ENCODE measurements at regions of chr20 and their contacts with region 1.

Region 1: DNA sequence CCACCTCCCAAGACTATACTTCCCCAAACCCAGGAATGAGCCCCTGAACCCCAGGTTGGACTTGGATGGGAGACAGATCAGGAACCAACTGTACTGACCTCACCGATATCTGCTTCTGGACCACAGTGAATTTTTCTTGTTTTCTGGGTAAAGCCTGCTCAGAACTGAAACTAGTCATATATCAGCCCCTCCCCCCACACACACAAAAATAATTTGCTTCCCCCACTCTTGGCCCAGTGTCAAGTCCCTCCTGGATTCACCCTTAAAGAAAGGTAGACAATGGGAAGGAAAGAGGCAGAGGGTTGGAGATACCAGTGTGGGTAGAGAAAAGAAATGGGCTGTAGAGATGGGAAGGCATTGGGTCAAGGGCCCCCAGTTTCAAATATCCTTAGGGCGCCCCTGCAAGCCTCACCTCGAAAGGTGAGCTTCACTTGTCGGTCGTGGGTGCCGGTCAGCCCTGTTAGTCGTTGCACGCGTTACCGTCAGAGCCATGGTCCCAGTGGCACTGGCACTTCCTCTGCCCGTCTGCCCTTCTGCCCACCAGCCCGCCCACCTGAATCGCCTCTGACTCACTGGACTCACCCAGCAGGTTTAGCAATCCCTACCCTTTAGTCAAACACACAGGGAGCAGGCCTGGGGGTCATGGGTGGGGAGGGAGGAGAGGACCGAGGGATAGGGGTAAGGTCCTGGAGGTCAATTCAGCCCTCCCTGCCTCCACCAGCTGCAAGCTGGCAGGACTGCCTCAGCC is 8.5 kb upstream of the SPAG4 start:
- DNase-seq: no peak
- ATAC-seq: peak; percentile 22
- H3K4me3 ChIP-seq: no peak overlapping the region
- H3K4me1 ChIP-seq: no peaks in the 10 kb centered on the region
- CTCF ChIP-seq: no peak

Region 2: DNA sequence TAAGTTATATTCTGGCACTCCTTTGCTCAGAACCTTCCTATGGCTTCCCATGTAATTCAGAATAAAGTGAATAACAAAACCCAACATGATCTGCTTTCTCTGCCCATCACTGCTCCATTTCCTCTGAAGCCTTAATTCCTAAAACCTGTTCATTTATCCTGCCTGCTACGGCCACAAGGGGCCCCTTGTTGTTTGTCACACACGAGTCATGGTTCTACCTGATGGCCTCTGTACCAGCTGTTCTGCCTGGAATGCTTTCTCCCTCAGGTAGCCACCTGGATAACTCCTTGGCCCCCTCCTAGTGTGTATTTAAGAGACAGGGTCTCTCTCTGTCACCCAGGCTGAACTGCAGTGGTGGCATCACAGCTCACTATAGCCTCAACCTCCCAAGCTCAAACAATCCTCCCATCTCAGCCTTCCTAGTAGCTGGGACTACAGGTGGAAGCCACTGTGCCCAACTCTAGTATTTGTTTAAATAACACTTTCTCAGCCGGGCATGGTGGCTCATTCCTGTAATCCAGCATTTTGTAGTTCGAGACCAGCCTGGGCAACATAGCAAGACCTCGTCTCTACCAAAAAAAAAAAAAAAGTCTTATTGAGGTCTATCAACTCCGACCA is 38.4 kb before region 1 on chr20:
- intact Hi-C with region 1: loop called in 1 of 2 experiments (anchors 5 kb)
- DNase-seq: peak in 2 of 3 donors; percentile 35 to 50
- ATAC-seq: peak; percentile 76
- H3K4me3 ChIP-seq: no peak overlapping the region
- H3K4me1 ChIP-seq: no peaks in the 10 kb centered on the region
- CTCF ChIP-seq: no peak

Region 3: GRCh38 chr20:36181934-36182603 is 574.9 kb after region 1 on chr20:
- intact Hi-C with region 1: no loop called
- DNase-seq: no peak
- ATAC-seq: no peak
- H3K4me3 ChIP-seq: no peak overlapping the region
- H3K4me1 ChIP-seq: no peaks in the 10 kb centered on the region
- CTCF ChIP-seq: no peak

Measured in mucosa of descending colon (tissue), 3 donors.